ENCODE measurements at regions of chr3 and their contacts with region 1.

Region 1: DNA sequence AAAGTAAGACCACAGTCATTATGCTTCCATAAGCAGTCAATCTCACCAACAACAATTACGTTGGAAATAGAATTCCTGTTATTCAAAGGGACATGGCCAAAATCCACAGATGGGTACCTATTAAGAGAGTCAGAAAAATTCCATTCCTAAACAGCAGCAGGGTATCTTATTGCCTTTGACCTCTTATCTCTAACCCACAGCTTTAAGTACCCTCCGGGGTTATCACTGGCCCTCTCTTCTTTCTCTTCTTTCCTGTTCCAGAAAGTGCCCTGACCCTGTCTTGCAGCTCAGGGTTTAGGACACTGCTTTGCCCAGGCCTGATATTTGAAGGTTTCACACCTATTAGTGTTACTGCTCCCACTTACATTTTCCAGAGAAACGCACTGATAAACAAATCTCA is 428.7 kb downstream of the TBC1D5 start:
- DNase-seq: no peak
- H3K4me3 ChIP-seq: no peak overlapping the region
- H3K27ac ChIP-seq: no peak overlapping the region
- H3K4me1 ChIP-seq: no peaks in the 10 kb centered on the region
- H3K27me3 ChIP-seq: no peaks in the 10 kb centered on the region
- CTCF ChIP-seq: no peak
- EP300 ChIP-seq: no peak
- POLR2A ChIP-seq: no peak

Region 2: DNA sequence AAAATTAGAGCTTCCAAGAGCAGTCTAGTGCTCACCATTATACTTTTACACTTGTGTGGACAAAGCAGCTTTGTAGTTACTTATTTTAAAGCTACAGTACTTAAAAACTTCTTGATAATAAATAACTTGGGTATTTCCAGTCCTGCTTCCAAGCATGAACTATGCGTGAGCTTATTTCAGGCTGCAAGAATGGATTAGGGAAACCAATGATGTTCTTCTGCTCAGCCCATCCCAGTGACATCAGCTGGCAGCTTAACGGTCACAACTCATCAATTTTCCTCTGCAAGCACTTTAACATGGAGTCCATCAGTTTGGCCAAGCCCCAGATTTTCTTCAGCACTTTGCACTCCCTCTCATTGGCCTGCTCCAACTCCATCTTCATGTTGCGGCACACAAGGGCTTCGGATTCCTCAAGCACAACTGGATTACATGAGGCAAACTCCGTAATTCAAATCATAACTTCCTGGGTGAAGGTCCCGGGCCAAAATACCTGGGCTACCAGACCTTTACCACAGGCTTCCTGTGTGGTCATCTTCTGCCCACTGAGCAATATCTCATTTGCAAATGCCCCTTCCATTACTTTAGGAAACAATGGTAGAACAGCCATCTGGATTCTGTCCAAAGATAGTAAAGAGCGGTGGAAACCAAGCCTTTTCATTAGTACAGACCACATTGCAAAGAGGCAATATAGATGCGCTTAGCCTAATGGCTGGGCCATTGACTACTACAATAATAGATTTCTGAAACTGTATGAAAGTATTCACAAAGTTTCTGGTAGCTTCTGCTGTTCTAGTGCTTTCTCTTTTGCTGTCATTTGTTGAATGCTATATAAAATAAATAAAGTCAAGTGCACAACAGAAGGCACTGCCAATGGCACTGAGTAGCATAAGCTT is 621.0 kb before region 1 on chr3:
- in situ Hi-C with region 1: no loop called
- intact Hi-C with region 1: no loop called
- DNase-seq: no peak
- H3K4me3 ChIP-seq: no peak overlapping the region
- H3K27ac ChIP-seq: no peak overlapping the region
- H3K4me1 ChIP-seq: no peaks in the 10 kb centered on the region
- H3K27me3 ChIP-seq: no peaks in the 10 kb centered on the region
- CTCF ChIP-seq: no peak
- EP300 ChIP-seq: no peak
- POLR2A ChIP-seq: no peak

Region 3: GRCh38 chr3:17278006-17278405 is 35.7 kb before region 1 on chr3:
- in situ Hi-C with region 1: no loop called
- intact Hi-C with region 1: loop called (anchors 1 kb)
- DNase-seq: no peak
- H3K4me3 ChIP-seq: no peak overlapping the region
- H3K27ac ChIP-seq: no peak overlapping the region
- H3K4me1 ChIP-seq: no peaks in the 10 kb centered on the region
- H3K27me3 ChIP-seq: no peaks in the 10 kb centered on the region
- CTCF ChIP-seq: no peak
- EP300 ChIP-seq: no peak
- POLR2A ChIP-seq: no peak

Region 4: DNA sequence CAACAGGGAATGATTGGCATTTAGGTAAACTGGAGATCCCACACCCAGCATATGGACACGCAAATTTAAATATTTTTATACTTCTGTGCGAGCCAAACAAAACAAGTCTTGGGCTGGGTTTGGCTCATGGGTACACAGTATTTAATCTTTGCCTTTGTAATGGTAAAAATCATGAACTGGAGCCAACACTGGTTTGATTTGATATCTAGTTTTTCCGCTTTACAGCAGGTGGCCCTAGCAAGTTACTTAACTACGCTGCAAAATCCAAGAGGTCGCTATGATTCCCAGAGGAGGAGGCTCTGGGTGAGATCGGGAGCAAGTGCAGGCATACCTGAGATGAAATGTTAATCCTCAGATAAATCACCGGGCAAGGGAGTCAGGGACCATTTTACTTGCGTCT is 1319.3 kb after region 1 on chr3:
- in situ Hi-C with region 1: no loop called
- intact Hi-C with region 1: loop called (anchors 10 kb)
- DNase-seq: no peak
- H3K4me3 ChIP-seq: no peak overlapping the region
- H3K27ac ChIP-seq: no peak overlapping the region
- H3K4me1 ChIP-seq: peaks cover 0 to 13% (median 6%) of the 10 kb centered on the region in 4 donors
- H3K27me3 ChIP-seq: no peaks in the 10 kb centered on the region
- CTCF ChIP-seq: no peak
- EP300 ChIP-seq: no peak
- POLR2A ChIP-seq: no peak